Activated CD4-positive, alpha-beta T cell treated with anti-CD3 and anti-CD28 coated beads for 36 hours (primary cell): ENCODE measurements at regions of chr6 and their contacts with region 1.

Region 1: DNA sequence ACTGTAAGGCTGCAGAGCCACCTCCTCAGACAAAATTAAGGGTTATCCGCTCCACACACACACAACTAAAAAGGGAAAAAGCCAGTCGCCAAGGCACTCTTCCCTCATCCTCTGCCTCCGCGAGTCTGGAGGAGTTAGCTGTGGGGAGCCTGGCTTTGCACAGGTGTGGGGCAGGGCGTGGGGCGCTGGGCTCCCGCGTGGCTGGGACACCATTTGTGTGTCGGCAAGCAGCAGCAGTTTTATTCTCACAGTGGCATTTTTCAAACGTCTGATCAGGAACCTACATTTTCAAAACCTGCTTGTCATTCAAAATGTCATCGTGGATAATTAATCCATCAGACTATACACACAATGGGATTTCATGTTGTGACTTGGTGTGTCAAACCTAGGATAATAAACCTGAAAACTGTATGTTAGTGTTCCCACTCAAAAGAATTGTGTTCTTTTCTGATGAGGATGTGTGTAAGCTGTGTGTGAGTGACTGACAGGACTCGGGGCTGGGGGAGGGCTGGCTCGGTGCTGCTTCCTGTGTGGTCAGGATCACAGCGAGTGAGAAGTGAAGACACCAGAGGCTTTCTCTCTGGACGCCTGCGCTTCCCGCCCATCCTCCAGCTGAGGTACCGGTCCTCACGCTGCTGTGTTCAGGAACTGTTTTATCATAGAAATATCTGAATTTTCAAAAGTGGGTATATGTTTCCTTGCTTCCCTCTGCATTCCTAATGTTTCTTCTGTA is 83.1 kb downstream of the IRF4 start:
- DNase-seq: peak; percentile 92
- ATAC-seq: peak; percentile 95
- H3K4me3 Mint-ChIP-seq: peak overlapping the region; percentile 63
- H3K27ac Mint-ChIP-seq: peak overlapping the region; percentile 79
- H3K4me1 Mint-ChIP-seq: peaks cover 77% of the 10 kb centered on the region
- H3K27me3 Mint-ChIP-seq: no peaks in the 10 kb centered on the region

Region 2: GRCh38 chr6:455006-455585 is 19.5 kb before region 1 on chr6:
- CTCF ChIA-PET with region 1: interaction called, 3 read pairs
- POLR2A ChIA-PET with region 1: interaction called, 3 read pairs
- intact Hi-C with region 1: loop called in 1 of 2 experiments (anchors 2 kb)
- DNase-seq: peak; percentile 71
- ATAC-seq: peak; percentile 96
- H3K4me3 Mint-ChIP-seq: no peak overlapping the region
- H3K27ac Mint-ChIP-seq: peak overlapping the region; percentile 51
- H3K4me1 Mint-ChIP-seq: peaks cover 30% of the 10 kb centered on the region
- H3K27me3 Mint-ChIP-seq: no peaks in the 10 kb centered on the region